Heart left ventricle (tissue), 16 donors: ENCODE measurements at regions of chr4 and their contacts with region 1.

Region 1: GRCh38 chr4:185209031-185209851 is at the start of gene SNX25:
- DNase-seq: peak; percentile 89 to 93 (median 91)
- ATAC-seq: peak; percentile 88 to 97 (median 96)
- H3K4me3 ChIP-seq: peak within 1 kb of the TSS; percentile 58 to 83 (median 70)
- H3K27ac ChIP-seq: peak within 1 kb of the TSS; percentile 76 to 92 (median 86)
- H3K4me1 ChIP-seq: peaks cover 4 to 42% (median 26%) of the 10 kb centered on the region in 12 donors
- H3K27me3 ChIP-seq: peaks cover 0 to 7% (median 0%) of the 10 kb centered on the region in 9 donors
- CTCF ChIP-seq: peak in 6 of 12 donors; percentile 18 to 44 (median 30)
- POLR2A ChIP-seq: peak; percentile 76 to 93
- total RNA-seq, gene SNX25: 7.5 to 12.4 (median 10.7) TPM

Region 2: DNA sequence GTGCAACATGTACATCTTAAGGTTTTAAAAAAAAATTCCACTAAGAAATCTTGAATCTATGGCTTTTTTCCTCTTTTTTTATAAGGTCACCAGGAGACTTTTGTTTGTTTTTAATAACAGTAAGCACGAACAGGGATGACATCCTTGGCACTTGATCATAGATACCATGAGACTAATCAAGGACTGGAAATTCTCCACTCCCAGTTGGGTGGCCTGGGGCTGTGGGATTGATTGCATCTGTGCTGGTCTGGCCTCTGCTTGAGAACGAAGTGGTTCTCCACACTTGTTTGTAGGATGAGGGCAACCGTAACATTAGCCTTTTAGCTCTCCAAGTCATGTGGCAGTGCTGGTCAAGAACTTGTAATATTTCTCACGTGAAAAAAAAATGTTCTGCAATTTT is 35.5 kb after region 1 on chr4:
- intact Hi-C with region 1: loop called in 1 of 10 experiments (anchors 5 kb)
- DNase-seq: no peak
- ATAC-seq: no peak
- H3K4me3 ChIP-seq: no peak overlapping the region
- H3K27ac ChIP-seq: no peak overlapping the region
- H3K4me1 ChIP-seq: peaks cover 0 to 20% (median 6%) of the 10 kb centered on the region in 12 donors
- H3K27me3 ChIP-seq: no peaks in the 10 kb centered on the region
- CTCF ChIP-seq: no peak
- POLR2A ChIP-seq: no peak

Region 3: DNA sequence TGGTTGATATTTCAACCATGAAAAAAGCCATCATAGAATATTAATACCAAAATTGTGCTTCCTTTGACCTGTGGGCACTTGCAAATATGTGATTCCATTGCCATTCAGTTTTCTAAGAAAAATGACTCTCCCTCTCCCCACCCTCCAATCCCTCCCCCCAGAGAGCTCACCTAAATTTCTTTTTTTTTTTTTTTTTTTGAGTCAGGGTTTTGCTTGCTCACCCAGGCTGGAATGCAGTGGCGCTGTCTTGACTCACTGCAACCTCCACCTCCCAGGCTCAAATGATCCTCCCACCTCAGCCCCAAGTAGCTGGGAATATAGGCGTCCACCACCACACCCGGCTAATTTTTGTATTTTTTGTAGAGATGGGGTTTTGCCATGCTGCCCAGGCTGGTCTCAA is 47.2 kb after region 1 on chr4:
- intact Hi-C with region 1: loop called in 3 of 10 experiments (anchors 5 kb)
- DNase-seq: no peak
- ATAC-seq: no peak
- H3K4me3 ChIP-seq: no peak overlapping the region
- H3K27ac ChIP-seq: no peak overlapping the region
- H3K4me1 ChIP-seq: peaks cover 0 to 22% (median 9%) of the 10 kb centered on the region in 12 donors
- H3K27me3 ChIP-seq: no peaks in the 10 kb centered on the region
- CTCF ChIP-seq: no peak
- POLR2A ChIP-seq: no peak

Region 4: DNA sequence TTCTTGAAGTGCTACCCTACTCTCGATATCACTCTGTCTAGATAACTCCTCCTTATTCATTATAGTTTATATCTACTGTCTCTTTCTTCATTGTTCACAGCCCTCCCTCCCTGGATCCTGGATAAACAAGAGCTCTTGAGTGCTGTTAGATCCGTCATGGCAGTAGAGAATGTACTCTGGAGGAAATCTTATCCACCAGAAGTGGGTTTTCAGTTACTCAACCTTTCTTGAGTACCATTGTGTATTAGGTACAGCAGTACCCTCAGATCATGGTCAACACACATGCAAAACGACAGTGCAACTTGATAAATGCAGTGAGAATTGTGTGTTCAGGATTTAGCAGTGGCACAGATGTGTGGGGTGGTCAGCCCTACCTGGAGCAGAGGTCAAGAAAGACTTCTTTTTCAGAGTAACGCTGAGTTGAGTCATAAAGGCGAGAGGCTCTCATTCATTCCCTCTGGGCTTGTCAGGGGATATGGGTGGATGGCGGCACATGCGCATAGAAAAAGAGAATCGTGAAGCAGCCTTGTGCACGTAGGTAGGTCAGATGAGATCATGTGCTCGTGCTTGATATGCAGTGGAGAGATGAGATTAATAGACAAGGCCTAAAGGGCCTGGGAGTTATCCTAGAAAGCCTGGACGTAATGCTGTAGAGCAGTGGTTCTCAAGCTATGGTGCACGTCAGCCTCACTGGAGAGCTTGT is 89.6 kb after region 1 on chr4:
- intact Hi-C with region 1: loop called in 3 of 10 experiments (anchors 5 to 10 kb)
- DNase-seq: no peak
- ATAC-seq: no peak
- H3K4me3 ChIP-seq: no peak overlapping the region
- H3K27ac ChIP-seq: no peak overlapping the region
- H3K4me1 ChIP-seq: no peaks in the 10 kb centered on the region
- H3K27me3 ChIP-seq: no peaks in the 10 kb centered on the region
- CTCF ChIP-seq: no peak
- POLR2A ChIP-seq: no peak

Region 5: GRCh38 chr4:185304944-185305690 is 95.9 kb after region 1 on chr4:
- intact Hi-C with region 1: loop called in 2 of 10 experiments (anchors 5 kb)
- DNase-seq: no peak
- ATAC-seq: peak; percentile 35 to 82 (median 55)
- H3K4me3 ChIP-seq: no peak overlapping the region
- H3K27ac ChIP-seq: no peak overlapping the region
- H3K4me1 ChIP-seq: peaks cover 0 to 8% (median 0%) of the 10 kb centered on the region in 12 donors
- H3K27me3 ChIP-seq: no peaks in the 10 kb centered on the region
- CTCF ChIP-seq: peak in 11 of 12 donors; percentile 23 to 61 (median 43)
- POLR2A ChIP-seq: no peak

Region 6: DNA sequence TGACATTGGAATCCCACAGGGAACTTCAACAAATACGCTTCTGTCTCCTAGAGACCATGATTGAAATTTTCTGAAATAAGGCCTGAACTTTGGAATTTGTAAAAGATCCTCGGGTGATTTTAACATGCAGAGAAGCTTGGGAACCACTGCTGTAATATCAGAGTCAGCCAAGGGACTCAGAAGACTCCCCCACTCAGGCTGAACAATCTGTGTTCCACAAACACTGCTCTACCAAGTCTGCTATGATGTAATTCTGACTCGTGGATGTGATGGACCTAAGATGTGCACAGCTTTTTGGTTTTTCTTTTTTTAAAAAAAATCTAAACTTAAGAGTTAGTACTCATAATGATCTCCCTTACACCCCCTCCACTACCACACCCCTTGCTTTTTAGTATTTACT is 160.5 kb after region 1 on chr4:
- intact Hi-C with region 1: no loop called
- DNase-seq: no peak
- ATAC-seq: no peak
- H3K4me3 ChIP-seq: no peak overlapping the region
- H3K27ac ChIP-seq: no peak overlapping the region
- H3K4me1 ChIP-seq: peaks cover 0 to 7% (median 0%) of the 10 kb centered on the region in 12 donors
- H3K27me3 ChIP-seq: no peaks in the 10 kb centered on the region
- CTCF ChIP-seq: no peak
- POLR2A ChIP-seq: no peak

Region 7: GRCh38 chr4:185395956-185396723 is 186.9 kb after region 1 on chr4:
- intact Hi-C with region 1: loop called in 9 of 10 experiments (anchors 1 to 10 kb)
- DNase-seq: peak; percentile 96 to 99 (median 97)
- ATAC-seq: peak; percentile 92 to 98 (median 96)
- H3K4me3 ChIP-seq: peak overlapping the region; percentile 64 to 88 (median 77)
- H3K27ac ChIP-seq: peak overlapping the region; percentile 98 to 100 (median 100)
- H3K4me1 ChIP-seq: peaks cover 0 to 46% (median 26%) of the 10 kb centered on the region in 12 donors
- H3K27me3 ChIP-seq: no peaks in the 10 kb centered on the region
- CTCF ChIP-seq: peak in 2 of 12 donors; percentile 10 to 17
- POLR2A ChIP-seq: peak in 1 of 2 donors; percentile 67